Activated naive CD4-positive, alpha-beta T cell treated with anti-CD3 and anti-CD28 coated beads for 36 hours (primary cell): ENCODE measurements at regions of chr4 and their contacts with region 1.

Region 1: GRCh38 chr4:83012687-83013419 is 2.2 kb upstream of the LIN54 start:
- DNase-seq: peak; percentile 98
- H3K4me3 Mint-ChIP-seq: peak overlapping the region; percentile 95
- H3K27ac Mint-ChIP-seq: peak overlapping the region; percentile 87
- H3K4me1 Mint-ChIP-seq: peaks cover 29% of the 10 kb centered on the region
- H3K27me3 Mint-ChIP-seq: no peaks in the 10 kb centered on the region

Region 2: GRCh38 chr4:82373816-82374625 is 638.8 kb before region 1 on chr4 and contains the start of gene HNRNPD:
- CTCF ChIA-PET with region 1: no interaction called
- intact Hi-C with region 1: loop called (anchors 1 kb)
- DNase-seq: peak; percentile 96
- H3K4me3 Mint-ChIP-seq: peak within 1 kb of the TSS; percentile 95
- H3K27ac Mint-ChIP-seq: peak within 1 kb of the TSS; percentile 95
- H3K4me1 Mint-ChIP-seq: peaks cover 33% of the 10 kb centered on the region
- H3K27me3 Mint-ChIP-seq: no peaks in the 10 kb centered on the region
- total RNA-seq, gene HNRNPD: 340 to 367 TPM

Region 3: GRCh38 chr4:82851885-82852750 is 160.7 kb before region 1 on chr4:
- CTCF ChIA-PET with region 1: interaction called, 7 read pairs
- intact Hi-C with region 1: loop called (anchors 1 kb)
- DNase-seq: no peak
- H3K4me3 Mint-ChIP-seq: no peak overlapping the region
- H3K27ac Mint-ChIP-seq: no peak overlapping the region
- H3K4me1 Mint-ChIP-seq: peaks cover 6% of the 10 kb centered on the region
- H3K27me3 Mint-ChIP-seq: no peaks in the 10 kb centered on the region

Region 4: DNA sequence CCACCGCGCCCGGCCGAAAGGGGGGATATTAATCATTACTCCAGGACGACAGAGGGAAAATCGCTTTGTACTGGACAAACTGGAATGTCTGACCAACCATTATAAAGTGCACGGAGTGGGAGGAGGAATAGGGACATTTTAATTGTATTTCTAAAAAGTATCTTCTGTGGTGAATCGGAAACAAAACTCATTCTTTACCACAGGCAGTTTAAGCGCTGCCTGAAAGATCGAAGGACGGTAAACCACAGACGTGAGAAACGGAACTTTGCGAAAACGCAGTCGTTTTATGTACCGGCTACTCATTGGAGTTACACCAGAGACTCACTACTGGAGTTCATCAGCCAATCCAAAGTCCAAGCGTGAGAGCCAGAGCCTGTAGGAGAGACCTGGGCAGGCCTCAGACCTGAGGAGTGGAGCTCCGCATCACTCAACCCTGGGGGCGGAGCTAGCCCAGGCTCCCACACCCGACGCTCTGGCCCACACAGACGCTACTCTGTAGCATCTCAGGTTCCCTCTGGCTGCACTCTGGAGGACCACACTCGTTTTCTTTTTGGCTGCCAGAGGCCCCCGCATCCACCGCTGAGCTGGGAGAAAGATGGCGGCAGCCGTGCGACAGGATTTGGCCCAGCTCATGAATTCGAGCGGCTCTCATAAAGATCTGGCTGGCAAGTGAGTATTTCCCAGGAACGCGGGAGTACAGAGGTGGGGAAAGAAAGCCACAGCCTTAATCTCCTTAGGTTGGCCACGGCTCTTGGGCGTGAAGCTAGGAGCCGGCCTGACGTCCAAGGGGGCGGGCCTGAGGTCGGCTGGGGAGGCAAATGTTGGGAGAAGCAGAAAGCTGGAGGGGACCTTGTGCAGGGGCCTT is 22.0 kb after region 1 on chr4 and contains the start of gene COPS4:
- CTCF ChIA-PET with region 1: interaction called, 20 read pairs
- intact Hi-C with region 1: loop called (anchors 1 kb)
- DNase-seq: peak; percentile 98
- H3K4me3 Mint-ChIP-seq: peak within 1 kb of the TSS; percentile 95
- H3K27ac Mint-ChIP-seq: peak within 1 kb of the TSS; percentile 98
- H3K4me1 Mint-ChIP-seq: peaks cover 36% of the 10 kb centered on the region
- H3K27me3 Mint-ChIP-seq: no peaks in the 10 kb centered on the region
- total RNA-seq, gene COPS4: 37.1 to 38.6 TPM

Region 5: DNA sequence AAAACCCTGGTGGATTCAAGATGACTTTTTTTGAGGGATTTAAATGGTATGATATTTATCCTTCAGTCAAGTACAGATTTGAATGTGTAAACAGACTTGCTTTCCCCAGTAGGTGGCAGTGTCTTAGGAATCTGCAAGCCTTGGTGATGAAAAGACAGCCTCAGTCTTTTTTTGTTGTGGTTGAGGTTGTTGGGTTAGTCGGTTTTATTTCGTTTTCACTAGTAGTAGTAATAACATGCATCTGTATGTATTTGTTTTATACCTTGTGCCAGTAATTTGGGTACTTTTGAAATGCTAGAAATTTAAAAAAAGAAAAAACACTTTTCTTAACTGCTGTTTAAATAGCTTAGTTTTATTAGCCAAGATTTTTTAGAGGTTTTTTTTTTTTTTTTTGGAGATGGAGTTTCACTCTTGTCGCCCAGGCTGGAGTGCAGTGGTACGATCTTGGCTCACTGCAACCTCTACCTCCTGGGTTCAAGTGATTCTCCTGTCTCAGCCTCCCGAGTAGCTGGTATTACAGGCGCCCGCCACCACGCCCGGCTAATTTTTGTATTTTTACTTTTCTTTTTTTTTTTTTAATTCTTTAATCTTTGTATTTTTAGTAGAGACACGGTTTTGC is 61.3 kb after region 1 on chr4:
- CTCF ChIA-PET with region 1: no interaction called
- intact Hi-C with region 1: loop called (anchors 1 kb)
- DNase-seq: peak; percentile 76
- H3K4me3 Mint-ChIP-seq: no peak overlapping the region
- H3K27ac Mint-ChIP-seq: no peak overlapping the region
- H3K4me1 Mint-ChIP-seq: peaks cover 13% of the 10 kb centered on the region
- H3K27me3 Mint-ChIP-seq: no peaks in the 10 kb centered on the region

Region 6: GRCh38 chr4:83455281-83456129 is 442.7 kb after region 1 on chr4 and contains the starts of genes HELQ and MRPS18C:
- CTCF ChIA-PET with region 1: no interaction called
- intact Hi-C with region 1: loop called (anchors 1 kb)
- DNase-seq: peak; percentile 98
- H3K4me3 Mint-ChIP-seq: peak within 1 kb of the TSS; percentile 100
- H3K27ac Mint-ChIP-seq: peak within 1 kb of the TSS; percentile 100
- H3K4me1 Mint-ChIP-seq: peaks cover 44% of the 10 kb centered on the region
- H3K27me3 Mint-ChIP-seq: no peaks in the 10 kb centered on the region
- total RNA-seq, gene HELQ: 7.9 to 10.9 TPM
- total RNA-seq, gene MRPS18C: 67.2 to 69.9 TPM